Heart left ventricle (tissue), 16 donors: ENCODE measurements at regions of chr17 and their contacts with region 1.

Region 1: DNA sequence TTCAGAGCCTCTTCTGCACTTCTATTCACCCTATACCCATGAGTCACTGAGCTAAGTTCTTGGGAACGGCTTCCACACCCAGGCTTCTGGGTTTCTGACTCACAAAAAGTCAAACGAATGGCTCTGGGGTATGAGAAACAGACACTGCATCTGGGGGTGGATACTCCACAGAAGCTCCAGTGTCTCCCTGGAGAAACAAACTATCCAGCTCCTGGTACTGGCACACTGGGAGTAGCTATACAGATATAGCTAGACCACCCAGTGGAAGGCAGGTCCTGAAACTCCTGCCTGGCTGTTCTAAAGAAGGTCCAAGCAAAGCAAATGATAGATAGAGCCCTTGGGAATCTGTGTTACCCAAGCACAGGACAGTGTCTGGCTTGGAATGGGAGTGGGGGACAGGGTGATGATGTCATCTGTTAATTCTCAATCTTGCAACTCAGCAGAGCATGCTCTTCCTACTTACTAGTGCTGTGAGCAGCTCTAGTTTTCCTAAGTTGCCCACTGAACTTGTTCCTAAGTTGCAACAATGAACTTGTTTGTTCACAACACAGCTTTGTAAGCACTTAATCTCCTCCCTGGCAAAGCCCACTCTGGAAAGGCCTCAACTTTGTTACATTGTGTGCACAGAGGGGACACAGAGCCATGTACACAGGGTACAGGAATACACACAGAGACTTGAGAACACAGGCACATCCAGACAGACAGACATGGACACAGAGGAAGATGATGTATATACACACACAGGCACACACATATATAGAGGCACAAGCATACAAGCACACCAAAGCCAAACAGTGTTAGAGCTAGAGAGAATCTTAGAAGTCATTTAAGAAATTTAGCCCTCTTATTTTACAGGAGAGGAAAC is 6.7 kb downstream of the MMP28 start:
- DNase-seq: no peak
- ATAC-seq: peak in 3 of 4 donors; percentile 16 to 59 (median 57)
- H3K4me3 ChIP-seq: no peak overlapping the region
- H3K27ac ChIP-seq: peak overlapping the region in 1 of 12 donors; percentile 73
- H3K4me1 ChIP-seq: peaks cover 0 to 13% (median 5%) of the 10 kb centered on the region in 12 donors
- H3K27me3 ChIP-seq: peaks cover 0 to 12% (median 0%) of the 10 kb centered on the region in 9 donors
- CTCF ChIP-seq: no peak
- POLR2A ChIP-seq: no peak

Region 2: GRCh38 chr17:35726127-35726952 is 62.4 kb before region 1 on chr17:
- intact Hi-C with region 1: no loop called
- DNase-seq: peak in 4 of 5 donors; percentile 60 to 78 (median 70)
- ATAC-seq: peak in 3 of 4 donors; percentile 23 to 34 (median 26)
- H3K4me3 ChIP-seq: no peak overlapping the region
- H3K27ac ChIP-seq: peak overlapping the region in 4 of 12 donors; percentile 19 to 48 (median 31)
- H3K4me1 ChIP-seq: peaks cover 0 to 32% (median 19%) of the 10 kb centered on the region in 12 donors
- H3K27me3 ChIP-seq: no peaks in the 10 kb centered on the region
- CTCF ChIP-seq: no peak
- POLR2A ChIP-seq: no peak

Region 3: GRCh38 chr17:35801583-35802224 is 13.0 kb after region 1 on chr17:
- intact Hi-C with region 1: loop called in 2 of 10 experiments (anchors 1 to 2 kb)
- DNase-seq: peak; percentile 79 to 88 (median 87)
- ATAC-seq: peak; percentile 34 to 76 (median 54)
- H3K4me3 ChIP-seq: no peak overlapping the region
- H3K27ac ChIP-seq: peak overlapping the region in 7 of 12 donors; percentile 1 to 59 (median 28)
- H3K4me1 ChIP-seq: peaks cover 3 to 41% (median 28%) of the 10 kb centered on the region in 12 donors
- H3K27me3 ChIP-seq: peaks cover 0 to 2% (median 0%) of the 10 kb centered on the region in 9 donors
- CTCF ChIP-seq: no peak
- POLR2A ChIP-seq: no peak

Region 4: DNA sequence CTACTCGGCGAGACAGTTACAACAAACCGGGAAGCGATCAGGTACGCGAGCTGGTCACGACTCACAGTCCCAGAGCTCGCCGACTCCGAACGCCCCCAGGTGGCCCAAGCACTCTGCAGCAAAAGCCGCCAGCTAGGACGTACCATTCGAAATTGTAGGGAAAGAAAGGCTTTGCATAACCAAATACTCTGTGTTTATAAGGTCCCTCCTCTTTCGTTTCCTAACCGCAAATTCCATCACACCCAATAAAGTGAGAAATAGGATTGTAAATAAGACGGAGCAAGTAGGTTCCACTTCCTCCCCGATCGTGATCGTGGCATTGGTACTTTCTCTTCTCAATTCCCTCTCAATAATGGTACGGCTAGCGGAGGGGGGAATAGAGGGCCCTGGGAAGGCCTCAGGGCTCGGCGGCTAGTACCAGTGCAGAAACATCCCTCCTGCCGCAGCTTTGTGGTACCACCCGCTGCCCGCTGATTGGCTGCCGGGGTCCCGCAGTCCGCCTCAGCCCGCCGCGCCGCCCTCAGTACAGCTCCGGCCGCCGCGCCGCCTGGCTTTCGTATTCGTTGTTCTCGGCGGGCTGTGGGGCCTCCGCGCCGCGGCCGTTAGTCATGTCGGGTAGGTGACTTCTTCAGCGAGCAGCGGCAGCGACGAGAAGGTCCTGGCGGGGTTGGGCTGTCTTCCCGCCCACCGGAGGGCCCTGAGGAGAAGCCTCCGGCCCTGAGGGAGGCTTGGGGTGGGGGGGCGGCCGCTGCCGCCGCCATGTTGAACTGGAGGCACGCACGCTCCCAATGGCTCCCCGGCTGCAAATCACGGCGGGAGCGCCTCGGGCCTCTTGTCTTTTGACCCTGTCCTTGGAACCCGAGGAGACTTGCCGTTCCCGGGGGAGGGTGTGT is 20.5 kb after region 1 on chr17 and contains the start of gene TAF15:
- intact Hi-C with region 1: loop called in 1 of 10 experiments (anchors 1 kb)
- DNase-seq: peak; percentile 95 to 98 (median 97)
- ATAC-seq: peak; percentile 97 to 100 (median 98)
- H3K4me3 ChIP-seq: peak within 1 kb of the TSS; percentile 58 to 96 (median 84)
- H3K27ac ChIP-seq: peak within 1 kb of the TSS; percentile 76 to 99 (median 94)
- H3K4me1 ChIP-seq: peaks cover 0 to 49% (median 29%) of the 10 kb centered on the region in 12 donors
- H3K27me3 ChIP-seq: no peaks in the 10 kb centered on the region
- CTCF ChIP-seq: peak; percentile 47 to 97 (median 72)
- POLR2A ChIP-seq: peak; percentile 90 to 97
- total RNA-seq, gene TAF15: 30.1 to 151 (median 121) TPM

Region 5: DNA sequence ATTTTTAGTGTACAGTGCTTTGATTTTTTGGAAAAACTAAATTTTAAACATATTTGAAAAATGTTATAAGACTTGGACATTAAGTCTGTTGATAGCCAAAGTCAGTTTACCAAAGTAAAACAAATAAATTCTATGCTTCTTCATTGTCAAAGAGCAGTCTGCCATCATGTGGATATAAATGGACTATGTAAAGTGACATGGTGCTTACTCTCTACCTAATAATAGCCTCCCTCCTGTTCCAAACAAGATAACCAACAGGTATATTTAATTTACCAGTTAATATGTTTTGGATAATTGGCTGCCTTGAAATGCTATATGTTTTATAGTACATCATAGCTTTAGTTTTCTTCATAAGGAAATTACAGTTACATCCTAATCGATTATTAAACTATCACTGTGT is 36.5 kb after region 1 on chr17:
- intact Hi-C with region 1: no loop called
- DNase-seq: no peak
- ATAC-seq: peak in 1 of 4 donors; percentile 65
- H3K4me3 ChIP-seq: no peak overlapping the region
- H3K27ac ChIP-seq: peak overlapping the region in 1 of 12 donors; percentile 2
- H3K4me1 ChIP-seq: peaks cover 0 to 5% (median 0%) of the 10 kb centered on the region in 12 donors
- H3K27me3 ChIP-seq: no peaks in the 10 kb centered on the region
- CTCF ChIP-seq: no peak
- POLR2A ChIP-seq: no peak